HepG2 (cell line): ENCODE measurements at regions of chr16 and their contacts with region 1.

Region 1: GRCh38 chr16:77951775-77952174 is 70.6 kb upstream of the CLEC3A start:
- DNase-seq: peak; percentile 50
- ATAC-seq: peak; percentile 83
- H3K4me3 ChIP-seq: no peak overlapping the region
- H3K27ac ChIP-seq: no peak overlapping the region
- H3K4me1 ChIP-seq: no peaks in the 10 kb centered on the region
- H3K27me3 ChIP-seq: peaks cover 0 to 20% of the 10 kb centered on the region in 2 experiments; a peak in 3 of 5 replicates
- CTCF ChIP-seq: peak; percentile 57
- EP300 ChIP-seq: no peak
- POLR2A ChIP-seq: no peak
- RAD21 ChIP-seq: no peak

Region 2: DNA sequence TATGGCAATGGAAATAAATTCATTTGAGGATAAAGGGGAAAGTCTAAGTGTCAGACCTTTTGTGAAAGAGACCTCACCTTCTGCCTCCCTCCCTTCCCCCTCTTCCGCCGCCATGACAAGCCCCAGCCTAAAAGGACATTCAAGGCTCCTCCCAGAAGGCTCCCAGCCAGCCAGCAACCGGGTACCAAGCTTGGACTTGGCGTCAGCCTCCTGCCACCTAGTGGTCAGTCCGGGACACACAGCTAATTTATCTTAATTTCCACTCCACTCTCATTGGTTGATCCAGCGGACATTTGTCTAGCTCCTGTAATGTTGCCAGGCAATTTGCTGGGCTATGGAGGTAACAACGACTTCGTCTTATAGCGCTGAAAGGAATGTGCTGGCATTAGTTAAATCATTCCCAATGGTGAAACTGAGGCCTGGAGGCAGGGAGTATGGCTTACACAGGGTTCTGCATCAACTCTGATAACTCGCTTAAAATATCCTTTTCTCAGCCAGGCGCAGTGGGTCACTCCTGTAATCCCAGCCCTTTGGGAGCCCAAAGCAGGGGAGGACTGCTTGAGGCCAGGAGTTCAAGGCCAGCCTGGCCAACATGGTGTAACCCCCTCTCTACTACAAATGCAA is 51.3 kb after region 1 on chr16:
- CTCF ChIA-PET with region 1: no interaction called
- POLR2A ChIA-PET with region 1: no interaction called
- in situ Hi-C with region 1: no loop called
- intact Hi-C with region 1: loop called (anchors 1 kb)
- DNase-seq: peak; percentile 76
- ATAC-seq: peak; percentile 82
- H3K4me3 ChIP-seq: no peak overlapping the region
- H3K27ac ChIP-seq: no peak overlapping the region
- H3K4me1 ChIP-seq: peaks cover 22% of the 10 kb centered on the region
- H3K27me3 ChIP-seq: no peaks in the 10 kb centered on the region; a peak in 1 of 5 replicates
- CTCF ChIP-seq: peak; percentile 90
- EP300 ChIP-seq: no peak
- POLR2A ChIP-seq: no peak
- RAD21 ChIP-seq: peak; percentile 82

Region 3: GRCh38 chr16:78099372-78100161 is 147.8 kb after region 1 on chr16 and contains the start of gene WWOX:
- CTCF ChIA-PET with region 1: no interaction called
- POLR2A ChIA-PET with region 1: no interaction called
- in situ Hi-C with region 1: no loop called
- intact Hi-C with region 1: loop called (anchors 1 kb)
- DNase-seq: peak; percentile 96
- ATAC-seq: peak; percentile 95
- H3K4me3 ChIP-seq: peak within 1 kb of the TSS; percentile 70 to 93 (median 92)
- H3K27ac ChIP-seq: peak within 1 kb of the TSS; percentile 90
- H3K4me1 ChIP-seq: peaks cover 54% of the 10 kb centered on the region
- H3K27me3 ChIP-seq: no peaks in the 10 kb centered on the region; a peak in 1 of 5 replicates
- CTCF ChIP-seq: peak; percentile 87
- EP300 ChIP-seq: no peak; a peak in 2 of 4 replicates
- POLR2A ChIP-seq: peak; percentile 86 to 93
- RAD21 ChIP-seq: peak; percentile 78
- total RNA-seq, gene WWOX: 37.4 and 38.4 TPM in 2 replicates